A673 (cell line): ENCODE measurements at regions of chr21 and their contacts with region 1.

Region 1: DNA sequence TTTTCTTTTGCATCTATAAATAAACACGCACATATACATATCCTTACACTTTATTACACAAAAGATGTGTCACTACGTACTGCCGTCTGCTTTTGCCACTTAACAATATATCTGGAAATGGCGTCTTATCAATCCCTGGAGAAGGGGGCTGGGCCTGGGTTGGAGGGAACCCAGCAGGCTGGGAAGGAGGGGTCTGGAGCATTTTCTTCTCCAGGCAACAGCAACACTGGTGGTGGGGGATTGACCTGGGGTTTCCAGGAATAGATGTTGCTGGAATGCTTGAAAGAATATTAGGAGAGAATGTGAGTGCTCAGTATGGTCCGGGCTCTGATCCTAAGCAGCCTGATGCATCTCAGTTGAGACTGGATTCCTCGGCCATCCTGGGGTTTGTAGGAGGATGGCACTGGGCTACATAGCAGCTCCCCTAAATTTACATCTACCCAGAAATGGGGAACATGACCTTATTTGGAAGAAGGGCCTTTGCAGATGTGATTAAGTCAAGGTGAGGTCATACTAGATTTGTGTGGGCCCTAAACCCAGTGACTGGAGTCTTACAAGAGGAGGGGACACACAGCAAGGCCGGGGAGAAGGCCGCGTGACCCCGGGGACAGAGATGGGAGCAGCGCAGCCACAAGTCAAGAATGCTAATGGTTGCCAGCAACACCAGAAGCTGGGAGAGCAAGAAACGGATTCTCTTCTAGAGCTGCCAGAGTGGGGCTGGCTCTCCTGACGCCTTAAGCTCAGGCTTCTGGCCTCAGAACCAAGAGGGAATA is 98.6 kb downstream of the SIK1 start:
- DNase-seq: no peak
- H3K4me3 ChIP-seq: no peak overlapping the region
- H3K27ac ChIP-seq: no peak overlapping the region
- H3K4me1 ChIP-seq: no peaks in the 10 kb centered on the region
- H3K27me3 ChIP-seq: no peaks in the 10 kb centered on the region
- CTCF ChIP-seq: no peak

Region 2: DNA sequence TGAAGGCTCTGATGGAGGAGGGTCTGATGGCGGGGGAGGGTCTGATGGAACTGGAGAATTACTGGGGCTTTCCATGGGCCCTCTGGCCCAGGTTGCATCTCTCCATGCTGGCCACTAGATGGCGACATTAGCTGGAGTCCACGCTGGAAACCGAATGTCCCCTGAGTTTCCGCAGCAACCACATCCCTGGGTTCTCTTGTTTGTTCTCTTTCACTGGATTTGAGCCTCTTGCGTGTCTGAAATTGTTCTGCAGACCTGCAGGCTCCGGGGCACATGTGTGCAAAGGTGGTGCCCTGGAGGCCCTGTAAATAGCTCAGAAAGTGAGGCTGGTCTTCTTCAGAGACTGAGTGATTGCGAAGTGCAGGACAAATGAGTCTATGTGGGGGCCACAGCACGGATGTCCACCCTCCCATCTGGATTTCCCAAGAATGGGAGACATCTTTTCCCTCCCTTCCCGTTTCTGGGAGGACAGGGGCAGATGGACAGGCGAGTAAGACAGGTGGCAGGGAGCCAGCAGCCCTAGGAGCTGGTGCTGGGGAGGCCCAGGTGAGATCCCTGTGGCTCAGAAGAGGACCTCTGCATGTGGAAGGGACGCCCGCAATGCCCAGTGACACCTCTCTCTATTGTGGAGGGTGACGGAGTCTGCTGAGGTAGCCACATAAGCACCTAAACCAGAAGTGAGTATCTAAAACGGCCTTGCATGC is 1182.7 kb before region 1 on chr21:
- CTCF ChIA-PET with region 1: no interaction called
- POLR2A ChIA-PET with region 1: no interaction called
- intact Hi-C with region 1: no loop called
- DNase-seq: peak; percentile 70
- H3K4me3 ChIP-seq: no peak overlapping the region
- H3K27ac ChIP-seq: no peak overlapping the region
- H3K4me1 ChIP-seq: no peaks in the 10 kb centered on the region
- H3K27me3 ChIP-seq: no peaks in the 10 kb centered on the region
- CTCF ChIP-seq: peak; percentile 89

Region 3: DNA sequence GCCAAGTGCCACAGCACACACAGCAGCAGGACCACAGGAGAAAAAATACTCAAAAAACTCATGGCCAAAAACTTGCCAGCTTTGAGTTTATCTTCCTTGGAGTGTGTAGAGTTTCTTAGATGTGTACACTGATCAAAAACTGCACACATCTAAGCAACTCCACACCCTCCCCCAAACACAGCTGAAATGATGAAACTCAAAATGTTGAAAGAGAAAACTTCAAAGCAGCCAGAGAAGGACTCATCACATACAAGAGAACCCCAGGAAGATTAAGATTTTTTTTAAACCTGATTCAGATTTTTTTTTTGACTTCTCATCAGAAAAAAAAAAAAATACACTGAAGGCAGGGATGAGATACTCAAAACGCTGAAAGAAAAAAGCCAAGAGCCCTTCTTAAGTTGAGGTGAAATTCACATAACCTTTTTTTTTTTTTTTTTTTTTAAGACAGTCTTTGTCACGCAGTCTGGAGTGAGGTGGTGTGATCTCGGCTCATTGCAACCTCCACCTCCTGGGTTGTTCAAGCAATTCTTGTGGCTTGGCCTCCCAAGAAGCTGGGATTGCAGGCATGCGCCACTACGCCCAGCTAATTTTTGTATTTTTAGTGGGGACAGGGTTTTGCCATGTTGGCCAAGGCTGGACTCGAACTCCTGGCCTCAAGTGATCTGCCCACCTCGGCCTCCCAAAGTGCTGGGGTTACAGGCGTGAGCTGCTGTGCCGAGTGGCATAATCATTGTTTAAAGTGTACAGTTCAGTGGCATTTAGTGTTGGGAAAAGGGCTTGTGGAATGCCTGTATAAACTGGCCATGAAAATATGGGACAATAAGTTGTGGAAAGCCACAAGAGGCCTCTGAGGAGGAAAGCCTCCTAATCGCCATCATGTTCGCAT is 369.6 kb after region 1 on chr21:
- CTCF ChIA-PET with region 1: no interaction called
- POLR2A ChIA-PET with region 1: interaction called, 11 read pairs
- intact Hi-C with region 1: no loop called
- DNase-seq: no peak
- H3K4me3 ChIP-seq: no peak overlapping the region
- H3K27ac ChIP-seq: no peak overlapping the region
- H3K4me1 ChIP-seq: peaks cover 2% of the 10 kb centered on the region
- H3K27me3 ChIP-seq: no peaks in the 10 kb centered on the region
- CTCF ChIP-seq: no peak